ENCODE measurements at regions of chr5 and their contacts with region 1.

Region 1: DNA sequence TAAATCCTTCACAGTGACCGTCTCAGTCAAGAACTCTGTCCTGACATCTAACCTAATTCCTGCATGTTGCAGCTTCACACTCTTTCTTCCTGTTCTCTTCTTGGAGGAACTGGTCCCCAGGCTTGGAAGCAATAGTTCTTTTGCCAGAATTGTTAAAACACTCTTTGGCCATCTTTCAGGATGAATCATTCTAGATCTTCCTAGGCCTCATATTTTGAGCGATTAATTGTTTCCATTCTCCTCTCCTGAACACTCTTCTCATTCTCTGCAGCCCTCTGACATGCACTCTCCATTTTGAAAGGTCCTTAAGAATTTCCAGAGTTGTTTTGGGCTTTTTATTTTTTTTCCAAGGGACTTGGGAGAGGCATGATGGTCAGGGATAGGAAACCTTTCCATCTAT is 85.8 kb downstream of the FAM114A2 start:
- DNase-seq: no peak
- ATAC-seq: peak in 3 of 4 donors; percentile 29 to 44 (median 31)
- H3K4me3 ChIP-seq: no peak overlapping the region
- H3K27ac ChIP-seq: peak overlapping the region in 3 of 12 donors; percentile 56 to 67 (median 59)
- H3K4me1 ChIP-seq: peaks cover 0 to 6% (median 0%) of the 10 kb centered on the region in 12 donors
- H3K27me3 ChIP-seq: no peaks in the 10 kb centered on the region
- CTCF ChIP-seq: no peak
- POLR2A ChIP-seq: no peak

Region 2: DNA sequence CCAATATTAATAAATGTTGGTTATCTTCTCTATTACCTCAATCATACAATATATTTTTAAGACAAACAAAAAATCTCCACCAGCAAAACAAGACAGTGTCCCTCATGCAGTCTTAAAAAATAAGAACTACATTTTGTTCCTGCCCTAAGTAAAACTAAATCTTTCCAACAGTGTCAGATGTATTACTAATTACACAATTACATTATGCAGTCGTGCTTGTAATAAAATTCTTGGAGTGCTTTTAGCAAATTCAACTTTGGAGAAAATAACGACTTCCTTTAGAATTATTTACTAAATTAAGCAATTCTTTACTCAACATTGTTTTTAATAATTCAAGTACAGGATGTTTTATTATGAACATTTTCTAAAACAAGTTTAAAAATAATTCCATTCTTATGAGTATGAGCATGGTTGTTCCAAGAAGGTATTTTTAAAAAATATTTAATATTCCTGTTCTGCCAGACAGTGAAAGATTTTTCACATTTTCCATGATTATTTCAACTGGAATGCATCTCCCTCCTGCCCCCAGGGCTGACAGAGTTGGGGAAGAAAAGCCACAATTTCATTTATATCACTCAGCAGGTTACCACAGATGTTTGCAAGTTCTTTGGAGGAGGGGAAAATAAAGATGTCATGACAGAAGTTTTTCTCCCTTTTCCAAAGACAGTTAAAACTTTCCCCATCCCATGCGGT is 52.0 kb before region 1 on chr5:
- intact Hi-C with region 1: loop called in 1 of 10 experiments (anchors 5 kb)
- DNase-seq: no peak
- ATAC-seq: peak in 3 of 4 donors; percentile 62 to 76 (median 70)
- H3K4me3 ChIP-seq: no peak overlapping the region
- H3K27ac ChIP-seq: peak overlapping the region in 7 of 12 donors; percentile 4 to 71 (median 31)
- H3K4me1 ChIP-seq: peaks cover 0 to 8% (median 0%) of the 10 kb centered on the region in 12 donors
- H3K27me3 ChIP-seq: no peaks in the 10 kb centered on the region
- CTCF ChIP-seq: no peak
- POLR2A ChIP-seq: no peak

Measured in heart left ventricle (tissue), 16 donors.